Activated CD4-positive, alpha-beta memory T cell treated with anti-CD3 and anti-CD28 coated beads for 36 hours (primary cell): ENCODE measurements at regions of chr18 and their contacts with region 1.

Region 1: GRCh38 chr18:13823707-13824395 is at the start of gene MC5R:
- DNase-seq: peak; percentile 80
- H3K4me3 Mint-ChIP-seq: no peak within 1 kb of the TSS
- H3K27ac Mint-ChIP-seq: no peak within 1 kb of the TSS
- H3K4me1 Mint-ChIP-seq: peaks cover 9% of the 10 kb centered on the region
- H3K27me3 Mint-ChIP-seq: peaks cover 20% of the 10 kb centered on the region
- total RNA-seq, gene MC5R: not detected

Region 2: GRCh38 chr18:14086458-14087231 is 262.8 kb after region 1 on chr18:
- CTCF ChIA-PET with region 1: interaction called, 32 read pairs
- POLR2A ChIA-PET with region 1: no interaction called
- intact Hi-C with region 1: loop called (anchors 1 kb)
- DNase-seq: no peak
- H3K4me3 Mint-ChIP-seq: no peak overlapping the region
- H3K27ac Mint-ChIP-seq: no peak overlapping the region
- H3K4me1 Mint-ChIP-seq: no peaks in the 10 kb centered on the region
- H3K27me3 Mint-ChIP-seq: no peaks in the 10 kb centered on the region